Dorsolateral prefrontal cortex (tissue), 120 donors: ENCODE measurements at regions of chr3 and their contacts with region 1.

Region 1: GRCh38 chr3:16247276-16248061 is 17.3 kb downstream of the DPH3 start:
- DNase-seq: peak; percentile 59 to 91 (median 84)
- H3K4me3 ChIP-seq: peak overlapping the region in 5 of 59 donors; percentile 6 to 31 (median 22)
- H3K27ac ChIP-seq: peak overlapping the region in 2 of 59 donors; percentile 18 to 56
- H3K27me3 ChIP-seq: no peaks in the 10 kb centered on the region
- CTCF ChIP-seq: peak; percentile 89 to 100 (median 95)

Region 2: GRCh38 chr3:15815696-15816095 is 431.8 kb before region 1 on chr3:
- intact Hi-C with region 1: loop called (anchors 1 to 5 kb)
- DNase-seq: no peak
- H3K4me3 ChIP-seq: no peak overlapping the region
- H3K27ac ChIP-seq: peak overlapping the region in 11 of 59 donors; percentile 1 to 55 (median 26)
- H3K27me3 ChIP-seq: no peaks in the 10 kb centered on the region
- CTCF ChIP-seq: peak; percentile 18 to 83 (median 62)

Region 3: GRCh38 chr3:15923640-15924405 is 323.6 kb before region 1 on chr3:
- intact Hi-C with region 1: loop called in 1 of 2 experiments (anchors 10 kb)
- DNase-seq: no peak
- H3K4me3 ChIP-seq: no peak overlapping the region
- H3K27ac ChIP-seq: no peak overlapping the region
- H3K27me3 ChIP-seq: no peaks in the 10 kb centered on the region
- CTCF ChIP-seq: no peak

Region 4: DNA sequence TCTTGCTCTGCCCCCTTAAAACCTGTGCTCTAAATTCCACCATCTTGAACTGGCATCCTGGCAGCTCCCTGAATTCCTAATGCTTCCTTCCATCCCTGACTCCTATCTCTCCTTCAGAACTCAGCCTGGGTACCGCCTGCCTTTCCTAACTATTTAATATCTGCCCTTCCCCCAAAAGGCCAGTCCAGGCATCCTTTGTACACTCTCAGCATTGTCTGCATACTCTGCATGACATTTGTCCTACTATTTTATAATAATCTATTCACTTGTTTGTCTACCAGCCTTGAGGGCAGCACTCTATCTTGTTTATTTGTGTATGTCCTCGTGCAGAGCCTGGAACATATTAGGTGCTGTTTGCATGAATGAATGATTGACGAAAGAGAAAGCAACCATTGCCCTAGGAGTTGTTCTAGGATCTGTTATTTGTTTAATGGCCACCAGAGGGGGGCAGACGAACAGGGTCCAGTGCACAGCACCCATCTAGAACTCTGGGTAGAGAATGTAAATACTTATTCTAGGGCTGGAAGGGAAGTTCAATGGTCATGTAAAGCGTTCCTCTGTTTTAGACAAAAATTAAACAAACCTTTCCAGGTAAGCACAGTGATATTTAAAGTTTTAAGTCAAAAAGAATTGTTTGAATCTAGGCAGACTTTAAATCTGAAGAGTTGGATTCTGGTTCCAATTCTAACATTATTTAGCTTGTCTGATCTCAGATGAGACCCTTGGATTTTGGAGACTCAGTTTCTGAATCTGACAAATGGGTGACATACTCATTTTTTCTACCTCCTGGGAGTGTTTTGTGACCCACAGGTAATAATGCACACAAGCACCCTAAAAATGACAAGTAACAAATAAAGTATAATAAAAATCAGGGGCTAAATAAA is 198.8 kb before region 1 on chr3:
- intact Hi-C with region 1: loop called (anchors 2 to 5 kb)
- DNase-seq: peak in 5 of 10 donors; percentile 42 to 66 (median 63)
- H3K4me3 ChIP-seq: peak overlapping the region in 46 of 59 donors; percentile 4 to 55 (median 34)
- H3K27ac ChIP-seq: peak overlapping the region in 18 of 59 donors; percentile 7 to 68 (median 38)
- H3K27me3 ChIP-seq: no peaks in the 10 kb centered on the region
- CTCF ChIP-seq: peak; percentile 75 to 97 (median 90)

Region 5: GRCh38 chr3:16112910-16113504 is 134.5 kb before region 1 on chr3:
- intact Hi-C with region 1: no loop called
- DNase-seq: no peak
- H3K4me3 ChIP-seq: no peak overlapping the region
- H3K27ac ChIP-seq: no peak overlapping the region
- H3K27me3 ChIP-seq: no peaks in the 10 kb centered on the region
- CTCF ChIP-seq: no peak

Region 6: GRCh38 chr3:16511681-16512434 is 264.4 kb after region 1 on chr3:
- intact Hi-C with region 1: no loop called
- DNase-seq: no peak
- H3K4me3 ChIP-seq: peak overlapping the region; percentile 8 to 82 (median 72)
- H3K27ac ChIP-seq: peak overlapping the region in 39 of 59 donors; percentile 10 to 86 (median 66)
- H3K27me3 ChIP-seq: peaks cover 0 to 30% (median 0%) of the 10 kb centered on the region in 45 donors
- CTCF ChIP-seq: no peak